Posterior cingulate gyrus (tissue), 11 donors: ENCODE measurements at regions of chr5 and their contacts with region 1.

Region 1: DNA sequence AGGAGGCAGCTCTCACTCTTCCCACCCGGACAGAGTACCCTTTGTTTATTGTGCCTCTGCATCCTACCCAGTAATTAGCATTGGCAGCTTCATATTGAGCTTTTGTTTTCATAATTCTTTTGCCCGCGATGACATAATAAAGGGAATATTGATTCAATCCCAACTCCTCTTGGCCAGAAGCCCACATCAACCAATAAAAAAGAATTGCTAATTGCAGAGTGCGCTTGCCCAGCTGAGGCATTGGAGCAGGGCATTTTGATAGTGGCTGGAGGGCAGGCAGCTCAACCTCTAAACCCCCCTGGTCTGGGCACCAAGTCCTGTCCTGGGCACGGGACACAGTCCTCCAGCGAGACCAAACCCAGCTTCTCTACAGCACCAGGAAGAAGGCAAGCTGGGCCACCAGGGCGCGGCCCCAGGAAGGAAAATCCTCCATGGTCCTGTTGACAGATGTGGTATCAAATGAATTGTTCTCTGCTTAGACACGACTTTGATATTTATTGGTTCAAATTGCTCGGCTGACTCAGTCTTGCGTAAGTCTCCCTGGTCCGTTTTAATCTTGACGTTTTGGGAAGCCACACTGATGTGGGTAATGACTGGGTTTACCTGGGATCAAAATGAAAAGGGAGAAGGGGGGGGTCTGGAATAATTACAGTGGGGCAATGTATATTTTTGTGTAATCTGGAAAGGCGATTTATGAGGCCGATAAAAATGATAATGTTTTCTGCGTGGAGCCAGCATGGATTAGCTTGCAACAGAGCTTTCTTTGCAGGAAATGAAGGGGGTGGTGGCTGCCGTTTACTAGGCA is 220.7 kb upstream of the MSX2 start:
- DNase-seq: peak; percentile 38 to 93 (median 60)

Region 2: GRCh38 chr5:174424219-174425053 is 79.2 kb before region 1 on chr5:
- intact Hi-C with region 1: loop called (anchors 5 kb)
- DNase-seq: peak; percentile 39 to 93 (median 52)